ENCODE measurements at regions of chr11 and their contacts with region 1.

Region 1: GRCh38 chr11:89159974-89160373 is 17.7 kb upstream of the TYR start:
- DNase-seq: no peak
- H3K4me3 Mint-ChIP-seq: no peak overlapping the region
- H3K27ac Mint-ChIP-seq: no peak overlapping the region
- H3K4me1 Mint-ChIP-seq: no peaks in the 10 kb centered on the region
- H3K27me3 Mint-ChIP-seq: no peaks in the 10 kb centered on the region

Region 2: DNA sequence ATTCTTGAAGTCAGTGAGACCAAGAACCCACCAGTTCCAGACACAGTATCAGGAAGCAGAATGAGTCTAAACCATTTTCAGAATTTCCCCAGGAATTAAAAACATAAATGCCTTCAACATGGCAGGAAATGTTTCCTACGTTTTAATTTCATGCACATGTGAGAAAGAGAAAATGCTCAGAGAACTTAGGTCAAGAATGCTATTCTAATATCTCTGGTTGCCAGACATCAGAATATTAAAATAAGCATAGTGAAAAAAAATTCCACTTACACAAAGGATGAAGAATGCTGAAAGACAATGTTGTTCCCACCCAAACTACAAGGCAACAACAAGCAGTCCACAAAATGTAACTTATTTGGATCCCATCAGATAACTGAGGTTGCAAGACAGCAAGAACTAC is 1089.5 kb before region 1 on chr11:
- CTCF ChIA-PET with region 1: no interaction called
- intact Hi-C with region 1: loop called (anchors 10 kb)
- DNase-seq: no peak
- H3K4me3 Mint-ChIP-seq: no peak overlapping the region
- H3K27ac Mint-ChIP-seq: no peak overlapping the region
- H3K4me1 Mint-ChIP-seq: no peaks in the 10 kb centered on the region
- H3K27me3 Mint-ChIP-seq: peaks cover 29% of the 10 kb centered on the region